ENCODE measurements at regions of chr14 and their contacts with region 1.

Region 1: DNA sequence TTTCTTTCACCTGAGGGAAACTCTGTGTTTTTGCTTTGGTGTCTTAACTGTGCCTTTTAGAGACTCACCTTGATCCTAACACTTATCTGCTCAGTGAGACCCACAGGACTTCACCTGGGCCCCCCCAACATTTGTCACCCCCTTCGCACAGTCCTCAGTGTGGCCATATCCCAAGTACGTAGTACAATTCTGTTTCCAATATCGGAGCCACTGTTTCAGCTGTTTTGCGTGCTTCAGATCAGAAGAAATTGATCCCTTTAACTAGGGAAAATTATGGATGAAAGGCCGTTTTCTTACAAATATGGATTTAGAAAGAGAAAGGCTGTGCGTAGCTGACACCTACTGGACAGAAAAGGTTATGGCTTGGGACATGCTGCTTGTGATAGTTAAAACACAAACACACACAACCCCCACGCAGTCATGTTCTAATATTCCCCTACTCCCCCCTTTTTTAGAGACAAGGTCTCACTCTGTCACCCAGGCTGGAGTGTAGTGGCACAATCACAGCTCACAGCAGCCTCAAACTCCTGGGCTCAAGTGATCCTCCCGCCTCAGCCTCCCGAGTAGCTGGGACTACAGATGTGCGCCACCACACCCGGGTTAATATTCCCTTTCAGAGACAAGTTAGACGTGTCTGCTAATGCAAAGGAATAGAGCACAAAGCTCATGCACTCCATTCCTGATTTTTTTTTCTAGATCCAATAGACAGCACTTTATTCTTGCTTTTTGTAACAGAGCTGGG is 3.6 kb upstream of the SLC7A8 start:
- DNase-seq: no peak
- H3K4me3 ChIP-seq: no peak overlapping the region
- H3K27ac ChIP-seq: no peak overlapping the region
- H3K4me1 ChIP-seq: peaks cover 3 to 19% (median 4%) of the 10 kb centered on the region in 3 donors
- H3K27me3 ChIP-seq: peaks cover 0 to 6% (median 0%) of the 10 kb centered on the region in 4 donors
- CTCF ChIP-seq: peak; percentile 48 to 94 (median 88)
- POLR2A ChIP-seq: no peak

Region 2: GRCh38 chr14:23104591-23105347 is 82.3 kb before region 1 on chr14 and contains the start of gene CIROP:
- intact Hi-C with region 1: no loop called
- DNase-seq: no peak
- H3K4me3 ChIP-seq: no peak within 1 kb of the TSS
- H3K27ac ChIP-seq: no peak within 1 kb of the TSS
- H3K4me1 ChIP-seq: no peaks in the 10 kb centered on the region
- H3K27me3 ChIP-seq: no peaks in the 10 kb centered on the region
- CTCF ChIP-seq: no peak
- POLR2A ChIP-seq: no peak
- total RNA-seq, gene CIROP: 0.38 TPM in 1 of 4 donors, not detected in the others

Region 3: DNA sequence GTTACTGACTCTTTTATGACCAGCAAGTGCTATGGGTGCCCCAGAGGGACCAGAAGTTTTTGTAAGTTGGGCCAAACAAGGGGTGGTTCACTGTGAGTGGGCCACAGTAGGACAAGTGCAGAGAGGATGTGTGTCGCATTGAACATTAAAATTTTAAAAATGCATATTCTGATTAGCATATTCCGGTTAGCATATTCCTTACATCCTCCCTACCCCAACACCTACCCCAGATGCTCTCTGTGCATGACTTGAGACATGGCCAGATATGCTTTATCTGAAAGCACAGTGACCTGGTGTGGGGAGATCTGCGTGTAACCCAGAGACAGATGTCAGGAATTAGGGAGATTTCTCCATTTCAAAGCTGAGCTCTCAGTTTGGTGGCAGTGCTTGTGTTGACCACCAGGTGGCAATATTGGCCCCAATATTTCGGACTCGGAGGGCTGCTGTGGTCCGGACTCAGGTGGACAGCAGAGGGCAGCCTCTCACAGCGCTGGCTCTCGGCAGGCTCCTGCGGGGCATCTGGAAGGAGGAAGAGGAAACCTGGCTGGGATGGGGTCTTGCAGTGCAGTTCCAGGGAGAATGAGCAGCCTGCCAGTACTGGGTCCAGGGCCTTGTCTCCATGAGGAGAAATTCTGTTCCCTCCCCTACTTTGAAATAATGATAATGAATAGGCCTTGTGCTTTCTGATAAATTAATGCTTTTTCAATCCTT is 66.4 kb before region 1 on chr14:
- intact Hi-C with region 1: loop called (anchors 2 kb)
- DNase-seq: peak; percentile 41
- H3K4me3 ChIP-seq: no peak overlapping the region
- H3K27ac ChIP-seq: peak overlapping the region in 3 of 4 donors; percentile 18 to 54 (median 51)
- H3K4me1 ChIP-seq: peaks cover 0 to 40% (median 19%) of the 10 kb centered on the region in 3 donors
- H3K27me3 ChIP-seq: peaks cover 0 to 7% (median 0%) of the 10 kb centered on the region in 4 donors
- CTCF ChIP-seq: peak; percentile 99 to 100 (median 100)
- POLR2A ChIP-seq: peak in 1 of 4 donors; percentile 24

Region 4: DNA sequence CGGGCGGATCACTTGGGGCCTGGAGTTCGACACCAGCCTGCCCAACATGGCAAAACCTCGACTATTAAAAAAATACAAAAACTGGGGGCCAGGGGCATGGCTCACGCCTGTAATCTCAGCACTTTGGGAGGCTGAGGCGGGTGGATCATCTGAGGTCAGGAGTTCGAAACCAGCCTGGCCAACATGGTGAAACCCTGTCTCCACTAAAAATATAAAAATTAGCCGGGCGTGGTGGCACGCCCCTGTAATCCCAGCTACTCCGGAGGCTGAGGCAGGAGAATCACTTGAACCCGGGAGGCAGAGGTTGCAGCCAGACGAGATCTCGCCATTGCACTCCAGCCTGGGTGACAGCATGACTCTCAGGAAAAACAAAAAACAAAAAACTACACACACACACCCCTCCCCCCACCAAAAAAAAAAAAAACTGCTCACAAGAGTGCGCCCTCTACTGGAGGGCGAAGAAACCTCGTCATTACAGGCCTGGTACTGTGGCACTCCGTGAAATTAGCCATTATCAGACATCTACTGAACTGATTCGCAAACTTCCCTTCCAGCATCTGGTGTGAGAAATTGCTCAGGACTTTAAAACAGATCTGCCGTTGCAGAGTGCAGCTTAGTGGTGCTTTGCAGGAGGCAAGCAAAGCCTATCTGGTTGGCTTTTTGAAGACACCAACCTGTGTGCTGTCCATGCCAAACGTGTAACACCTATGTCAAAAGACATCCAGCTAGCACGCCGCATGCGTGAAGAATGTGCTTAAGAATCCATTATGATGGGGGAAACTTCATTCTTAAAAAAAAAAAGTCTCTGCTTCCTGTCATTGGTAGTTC is 107.9 kb after region 1 on chr14:
- intact Hi-C with region 1: loop called (anchors 10 kb)
- DNase-seq: no peak
- H3K4me3 ChIP-seq: peak overlapping the region in 1 of 4 donors; percentile 33
- H3K27ac ChIP-seq: no peak overlapping the region
- H3K4me1 ChIP-seq: peaks cover 8 to 49% (median 20%) of the 10 kb centered on the region in 3 donors
- H3K27me3 ChIP-seq: peaks cover 0 to 6% (median 0%) of the 10 kb centered on the region in 4 donors
- CTCF ChIP-seq: peak; percentile 59 to 91 (median 72)
- POLR2A ChIP-seq: no peak

Measured in esophagus squamous epithelium (tissue), 5 donors.